Activated naive CD4-positive, alpha-beta T cell treated with anti-CD3 and anti-CD28 coated beads for 36 hours (primary cell): ENCODE measurements at regions of chr1 and their contacts with region 1.

Region 1: GRCh38 chr1:36134505-36135329 is 9.7 kb upstream of the COL8A2 start:
- DNase-seq: peak; percentile 57
- H3K4me3 Mint-ChIP-seq: no peak overlapping the region
- H3K27ac Mint-ChIP-seq: no peak overlapping the region
- H3K4me1 Mint-ChIP-seq: peaks cover 2% of the 10 kb centered on the region
- H3K27me3 Mint-ChIP-seq: no peaks in the 10 kb centered on the region

Region 2: GRCh38 chr1:36099681-36100341 is 34.9 kb before region 1 on chr1:
- CTCF ChIA-PET with region 1: interaction called, 61 read pairs
- intact Hi-C with region 1: loop called (anchors 1 kb)
- DNase-seq: peak; percentile 85
- H3K4me3 Mint-ChIP-seq: no peak overlapping the region
- H3K27ac Mint-ChIP-seq: no peak overlapping the region
- H3K4me1 Mint-ChIP-seq: peaks cover 4% of the 10 kb centered on the region
- H3K27me3 Mint-ChIP-seq: no peaks in the 10 kb centered on the region

Region 3: DNA sequence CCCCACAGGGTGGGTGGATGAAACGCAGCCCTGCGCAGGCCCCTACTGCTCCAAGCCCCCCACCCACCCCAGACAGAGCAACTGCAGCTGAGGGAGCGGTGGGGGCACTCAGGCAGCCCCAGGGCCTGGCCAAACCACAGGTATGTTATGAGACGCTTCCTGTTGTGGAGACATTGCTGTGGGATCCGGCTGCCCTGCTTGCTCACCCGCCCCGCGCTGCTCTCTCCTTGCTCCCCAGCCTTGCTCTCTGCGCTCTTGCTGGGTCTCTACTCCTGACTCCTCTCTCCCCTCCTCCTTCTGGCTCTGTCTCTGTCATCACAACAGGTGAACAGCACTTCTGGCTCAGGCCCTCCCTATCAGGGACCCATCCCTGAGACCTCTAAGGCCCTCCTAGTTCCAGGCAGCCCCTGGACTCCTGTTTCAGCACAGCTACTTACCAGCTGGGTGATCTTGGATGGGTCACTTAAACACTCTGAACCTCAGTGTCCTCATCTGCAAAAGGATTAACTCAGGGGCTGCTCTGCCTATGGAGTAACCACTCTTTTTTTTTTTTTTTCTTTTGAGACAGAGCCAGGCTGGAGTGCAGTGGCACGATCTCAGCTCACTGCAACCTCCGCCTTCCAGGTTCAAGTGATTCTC is 25.6 kb before region 1 on chr1:
- CTCF ChIA-PET with region 1: interaction called, 61 read pairs
- intact Hi-C with region 1: no loop called
- DNase-seq: peak; percentile 65
- H3K4me3 Mint-ChIP-seq: no peak overlapping the region
- H3K27ac Mint-ChIP-seq: no peak overlapping the region
- H3K4me1 Mint-ChIP-seq: peaks cover 22% of the 10 kb centered on the region
- H3K27me3 Mint-ChIP-seq: no peaks in the 10 kb centered on the region